Endothelial cell of umbilical vein (primary cell): ENCODE measurements at regions of chr6 and their contacts with region 1.

Region 1: DNA sequence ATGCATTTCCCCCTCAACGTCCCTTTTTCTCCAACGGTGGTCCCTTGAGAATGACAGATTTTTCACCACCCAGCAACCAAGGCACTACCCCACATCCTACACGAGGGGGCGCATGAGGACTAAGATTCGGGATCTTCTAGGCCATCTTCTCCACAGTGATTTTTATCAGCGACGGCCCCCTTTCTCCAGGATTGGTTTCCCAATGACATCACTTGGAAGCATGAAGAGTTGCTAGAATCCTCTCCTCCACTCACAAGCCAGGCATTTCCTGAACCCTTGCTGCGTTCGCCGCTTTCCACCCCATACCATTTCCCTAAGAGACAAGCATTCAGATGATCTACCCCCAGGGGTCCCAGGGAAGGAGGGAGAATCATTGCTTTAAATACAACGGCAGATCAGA is 252.0 kb downstream of the HIVEP2 start:
- DNase-seq: peak; percentile 85
- H3K4me3 ChIP-seq: peak overlapping the region in 1 of 3 experiments; percentile 2
- H3K27ac ChIP-seq: peak overlapping the region; percentile 85
- H3K4me1 ChIP-seq: peaks cover 13% of the 10 kb centered on the region
- H3K27me3 ChIP-seq: no peaks in the 10 kb centered on the region
- CTCF ChIP-seq: peak; percentile 80 to 88
- POLR2A ChIP-seq: no peak

Region 2: DNA sequence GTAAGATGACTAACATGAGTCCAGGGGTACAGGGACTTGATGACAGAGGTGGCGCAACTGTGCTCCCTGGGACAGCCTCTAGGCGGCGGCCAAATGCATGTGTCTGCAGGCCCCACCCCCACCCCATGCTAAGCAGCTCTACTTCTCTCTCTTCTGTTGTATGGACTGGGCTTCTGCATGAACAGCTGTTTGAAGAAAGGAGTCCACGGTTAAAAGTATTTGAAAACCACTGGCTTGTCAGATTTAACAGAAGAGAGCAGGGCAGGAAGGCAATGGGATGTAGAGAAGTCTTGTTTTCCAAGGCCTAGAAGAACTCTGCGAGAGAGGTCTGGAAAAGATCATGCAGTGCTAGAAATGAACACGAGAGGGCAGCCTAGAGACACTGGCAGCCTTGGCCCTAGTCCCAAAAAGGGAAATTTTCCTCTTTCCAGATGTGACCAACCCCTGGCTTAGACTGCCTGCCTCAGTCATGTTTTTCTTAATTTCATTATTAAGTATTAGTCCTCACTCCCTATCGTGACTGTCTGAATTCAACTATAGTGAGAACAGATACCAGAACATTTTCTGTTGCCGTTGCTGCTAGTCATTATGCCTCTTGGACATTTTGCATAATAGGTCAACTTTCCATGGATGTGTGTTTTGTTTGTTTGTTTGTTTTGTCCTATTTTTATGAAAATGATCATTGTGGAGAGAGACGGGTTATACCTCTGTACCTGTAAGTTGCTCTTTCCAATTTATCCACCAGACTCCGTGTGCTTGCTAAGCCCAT is 126.1 kb before region 1 on chr6:
- CTCF ChIA-PET with region 1: no interaction called
- POLR2A ChIA-PET with region 1: no interaction called
- dilution Hi-C with region 1: no loop called
- intact Hi-C with region 1: loop called (anchors 2 kb)
- DNase-seq: peak; percentile 62
- H3K4me3 ChIP-seq: no peak overlapping the region
- H3K27ac ChIP-seq: no peak overlapping the region
- H3K4me1 ChIP-seq: no peaks in the 10 kb centered on the region
- H3K27me3 ChIP-seq: peaks cover 2 to 16% of the 10 kb centered on the region in 2 experiments
- CTCF ChIP-seq: peak; percentile 82 to 85
- POLR2A ChIP-seq: no peak

Region 3: GRCh38 chr6:142763205-142763604 is 70.3 kb after region 1 on chr6:
- CTCF ChIA-PET with region 1: no interaction called
- POLR2A ChIA-PET with region 1: no interaction called
- dilution Hi-C with region 1: no loop called
- intact Hi-C with region 1: loop called (anchors 1 kb)
- DNase-seq: peak; percentile 63
- H3K4me3 ChIP-seq: no peak overlapping the region
- H3K27ac ChIP-seq: peak overlapping the region; percentile 56
- H3K4me1 ChIP-seq: peaks cover 16% of the 10 kb centered on the region
- H3K27me3 ChIP-seq: no peaks in the 10 kb centered on the region
- CTCF ChIP-seq: no peak
- POLR2A ChIP-seq: no peak

Region 4: DNA sequence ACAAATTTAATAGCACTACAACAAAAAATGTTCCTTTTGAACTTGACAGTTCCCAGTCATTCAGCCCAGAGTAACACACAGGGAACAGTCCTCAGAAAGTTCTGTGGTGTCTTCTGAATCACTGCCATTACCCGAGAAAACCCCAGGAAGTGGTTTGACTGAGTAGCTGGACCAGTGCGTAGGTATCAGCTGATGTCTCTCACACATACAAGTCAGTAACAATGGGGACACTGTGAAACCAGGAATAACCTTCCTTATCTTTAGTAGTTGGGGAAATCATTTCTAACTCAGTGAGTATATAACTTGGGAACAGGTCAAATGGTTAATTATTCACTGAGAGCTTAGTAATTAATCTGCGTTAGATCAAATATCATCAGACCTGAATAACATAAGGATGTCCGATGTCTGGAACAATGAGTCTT is 179.0 kb after region 1 on chr6:
- CTCF ChIA-PET with region 1: interaction called, 8 read pairs
- POLR2A ChIA-PET with region 1: no interaction called
- dilution Hi-C with region 1: no loop called
- intact Hi-C with region 1: loop called (anchors 1 kb)
- DNase-seq: peak; percentile 90
- H3K4me3 ChIP-seq: no peak overlapping the region
- H3K27ac ChIP-seq: peak overlapping the region; percentile 59
- H3K4me1 ChIP-seq: peaks cover 40% of the 10 kb centered on the region
- H3K27me3 ChIP-seq: no peaks in the 10 kb centered on the region
- CTCF ChIP-seq: no peak
- POLR2A ChIP-seq: no peak

Region 5: DNA sequence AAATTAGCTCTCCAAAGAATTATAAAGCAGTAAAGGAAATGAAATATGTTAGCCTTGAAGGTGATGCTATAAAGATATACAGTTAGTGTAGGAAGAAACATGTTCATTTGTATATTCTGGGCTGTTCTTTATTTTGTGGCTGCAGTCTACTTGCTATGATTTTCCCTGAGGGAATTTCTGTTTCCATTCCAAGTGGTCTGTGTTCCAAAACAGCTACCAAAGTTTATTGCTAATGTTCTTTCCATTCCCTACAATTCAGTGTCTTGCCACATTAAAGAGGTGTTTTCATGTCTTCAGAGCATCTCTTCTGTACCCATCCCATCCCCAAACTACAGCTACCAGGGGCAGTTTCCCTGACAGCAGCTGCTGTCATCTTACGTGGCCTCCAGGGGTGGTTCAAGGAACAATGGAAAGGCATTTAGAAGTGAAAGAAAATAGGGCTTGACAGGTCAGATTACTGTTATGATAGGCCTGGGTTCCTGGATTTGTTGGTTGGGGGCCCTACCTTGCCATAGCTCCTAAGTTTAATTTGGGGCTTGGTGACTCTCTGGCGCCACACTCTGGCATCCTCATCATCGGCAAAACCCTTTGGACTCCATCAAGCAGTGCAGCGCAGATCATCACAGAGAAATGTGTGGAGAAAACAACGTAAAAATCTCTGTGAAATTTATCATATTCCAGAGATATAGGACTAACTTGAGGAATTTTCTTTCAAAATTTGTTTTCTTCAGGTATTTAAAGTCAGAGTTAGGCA is 333.9 kb after region 1 on chr6:
- CTCF ChIA-PET with region 1: interaction called, 124 read pairs
- POLR2A ChIA-PET with region 1: no interaction called
- dilution Hi-C with region 1: no loop called
- intact Hi-C with region 1: loop called (anchors 1 kb)
- DNase-seq: peak; percentile 61
- H3K4me3 ChIP-seq: no peak overlapping the region
- H3K27ac ChIP-seq: no peak overlapping the region
- H3K4me1 ChIP-seq: no peaks in the 10 kb centered on the region
- H3K27me3 ChIP-seq: no peaks in the 10 kb centered on the region
- CTCF ChIP-seq: peak; percentile 66 to 72
- POLR2A ChIP-seq: no peak

Region 6: GRCh38 chr6:143337201-143337949 is 644.4 kb after region 1 on chr6:
- CTCF ChIA-PET with region 1: interaction called, 33 read pairs
- POLR2A ChIA-PET with region 1: no interaction called
- dilution Hi-C with region 1: no loop called
- intact Hi-C with region 1: loop called (anchors 1 kb)
- DNase-seq: peak; percentile 31
- H3K4me3 ChIP-seq: no peak overlapping the region
- H3K27ac ChIP-seq: no peak overlapping the region
- H3K4me1 ChIP-seq: no peaks in the 10 kb centered on the region
- H3K27me3 ChIP-seq: no peaks in the 10 kb centered on the region
- CTCF ChIP-seq: peak; percentile 63 to 73
- POLR2A ChIP-seq: no peak